PC-9 (cell line): ENCODE measurements at regions of chr5 and their contacts with region 1.

Region 1: DNA sequence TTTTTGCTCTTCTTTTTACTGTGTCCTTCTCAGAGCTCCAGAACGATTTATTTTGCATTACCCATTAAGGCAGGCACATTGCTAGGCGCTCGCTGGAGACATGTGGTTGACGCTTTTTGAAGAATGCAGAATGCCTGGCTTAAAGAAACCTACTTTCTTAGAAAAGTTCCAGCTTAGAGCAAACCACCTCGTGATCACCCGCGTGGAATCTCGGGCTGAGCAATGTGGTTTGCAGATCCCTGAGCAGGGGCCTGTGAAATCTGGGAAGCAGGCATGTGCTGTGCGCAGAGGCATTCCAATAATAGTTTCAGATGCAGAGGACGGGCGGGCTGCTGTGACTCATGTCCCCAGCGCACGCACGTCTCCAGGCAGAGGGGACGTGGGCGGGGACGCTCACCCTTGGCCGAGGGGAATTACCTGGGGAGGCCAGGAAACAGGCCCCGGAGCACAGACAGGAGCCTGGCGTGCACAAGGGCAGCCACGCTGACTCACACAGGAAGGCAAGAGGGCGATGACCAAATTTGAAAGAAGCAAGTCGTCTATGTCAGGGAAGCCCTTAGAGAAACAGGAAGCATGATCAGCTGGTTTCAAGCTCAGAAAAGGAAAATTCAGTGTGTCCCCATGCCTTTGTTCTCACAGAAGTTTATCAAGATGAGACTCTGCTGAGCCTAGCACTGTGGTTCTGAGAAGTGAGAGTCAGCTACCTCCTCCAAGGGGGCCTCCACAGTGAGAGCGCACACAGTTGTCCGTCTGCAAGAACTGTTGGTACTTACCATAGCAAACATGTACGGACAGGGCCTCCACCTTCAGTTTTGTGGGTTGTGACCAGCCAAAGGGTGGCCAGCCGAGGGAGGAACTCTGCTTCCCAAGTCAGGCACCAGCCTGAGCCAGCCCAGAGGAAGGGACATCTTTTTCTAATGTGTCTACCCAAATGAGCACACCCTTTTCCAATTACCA is 218.6 kb downstream of the PIK3R1 start:
- DNase-seq: peak; percentile 96 to 98
- H3K4me3 ChIP-seq: no peak overlapping the region
- H3K27ac ChIP-seq: peak overlapping the region; percentile 76
- H3K4me1 ChIP-seq: peaks cover 32% of the 10 kb centered on the region
- H3K27me3 ChIP-seq: no peaks in the 10 kb centered on the region
- CTCF ChIP-seq: no peak

Region 2: GRCh38 chr5:67341478-67341877 is 1092.7 kb before region 1 on chr5:
- CTCF ChIA-PET with region 1: no interaction called
- POLR2A ChIA-PET with region 1: no interaction called
- intact Hi-C with region 1: no loop called
- DNase-seq: no peak
- H3K4me3 ChIP-seq: no peak overlapping the region
- H3K27ac ChIP-seq: no peak overlapping the region
- H3K4me1 ChIP-seq: no peaks in the 10 kb centered on the region
- H3K27me3 ChIP-seq: no peaks in the 10 kb centered on the region; the same call in 1 of the 2 replicates
- CTCF ChIP-seq: no peak

Region 3: GRCh38 chr5:67773411-67774266 is 660.6 kb before region 1 on chr5:
- CTCF ChIA-PET with region 1: no interaction called
- POLR2A ChIA-PET with region 1: no interaction called
- intact Hi-C with region 1: no loop called
- DNase-seq: peak in 1 of 2 experiments; percentile 39
- H3K4me3 ChIP-seq: no peak overlapping the region
- H3K27ac ChIP-seq: peak overlapping the region; percentile 33; the same call in 1 of the 2 replicates
- H3K4me1 ChIP-seq: peaks cover 23% of the 10 kb centered on the region; the same call in 1 of the 2 replicates
- H3K27me3 ChIP-seq: no peaks in the 10 kb centered on the region
- CTCF ChIP-seq: no peak

Region 4: DNA sequence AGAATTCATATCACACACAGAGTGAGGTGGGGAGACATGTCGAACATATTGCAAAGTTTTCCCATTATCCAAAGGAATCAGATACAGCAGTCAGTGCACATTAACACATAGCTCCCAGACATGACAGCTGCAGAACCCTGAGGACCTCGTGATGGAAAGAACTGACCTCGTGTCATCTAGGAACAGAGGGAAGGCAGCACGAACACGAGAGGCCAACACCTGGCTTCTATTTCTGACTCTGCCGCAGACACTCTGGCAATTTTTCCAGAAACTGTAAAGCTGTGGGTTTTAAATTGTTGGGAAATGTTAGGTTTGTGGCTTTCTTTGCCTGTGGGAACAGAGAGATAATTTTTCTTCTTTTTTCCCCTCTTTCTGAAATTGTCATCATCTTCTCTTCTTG is 533.7 kb before region 1 on chr5:
- CTCF ChIA-PET with region 1: no interaction called
- POLR2A ChIA-PET with region 1: no interaction called
- intact Hi-C with region 1: no loop called
- DNase-seq: no peak
- H3K4me3 ChIP-seq: no peak overlapping the region
- H3K27ac ChIP-seq: no peak overlapping the region
- H3K4me1 ChIP-seq: no peaks in the 10 kb centered on the region
- H3K27me3 ChIP-seq: no peaks in the 10 kb centered on the region
- CTCF ChIP-seq: no peak

Region 5: GRCh38 chr5:68097066-68097465 is 337.1 kb before region 1 on chr5:
- CTCF ChIA-PET with region 1: no interaction called
- POLR2A ChIA-PET with region 1: no interaction called
- intact Hi-C with region 1: no loop called
- DNase-seq: no peak
- H3K4me3 ChIP-seq: no peak overlapping the region
- H3K27ac ChIP-seq: no peak overlapping the region
- H3K4me1 ChIP-seq: no peaks in the 10 kb centered on the region
- H3K27me3 ChIP-seq: no peaks in the 10 kb centered on the region
- CTCF ChIP-seq: no peak

Region 6: GRCh38 chr5:68331192-68332079 is 102.8 kb before region 1 on chr5:
- CTCF ChIA-PET with region 1: no interaction called
- POLR2A ChIA-PET with region 1: no interaction called
- intact Hi-C with region 1: loop called (anchors 5 kb)
- DNase-seq: no peak
- H3K4me3 ChIP-seq: no peak overlapping the region
- H3K27ac ChIP-seq: no peak overlapping the region
- H3K4me1 ChIP-seq: peaks cover 30% of the 10 kb centered on the region
- H3K27me3 ChIP-seq: no peaks in the 10 kb centered on the region
- CTCF ChIP-seq: no peak

Region 7: DNA sequence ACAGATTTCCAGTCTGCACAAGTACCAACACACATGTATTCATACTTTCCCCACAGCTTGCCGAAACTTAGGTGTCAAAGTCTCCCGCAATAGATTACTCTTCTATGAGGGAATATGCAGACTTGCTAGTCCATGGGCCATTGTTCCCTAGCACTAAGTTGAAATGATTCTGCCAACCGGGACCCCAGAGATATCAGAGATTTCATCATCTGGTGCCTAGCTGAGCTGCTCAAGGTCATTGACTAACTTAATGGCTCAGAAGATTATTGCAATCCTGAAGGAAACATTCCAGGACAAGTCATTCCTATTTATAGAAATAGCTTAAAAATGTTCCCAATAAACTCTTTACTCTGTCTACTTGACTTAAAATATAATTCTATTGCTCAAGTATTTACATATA is 16.0 kb before region 1 on chr5:
- CTCF ChIA-PET with region 1: interaction called, 17 read pairs
- POLR2A ChIA-PET with region 1: no interaction called
- intact Hi-C with region 1: no loop called
- DNase-seq: no peak
- H3K4me3 ChIP-seq: no peak overlapping the region
- H3K27ac ChIP-seq: no peak overlapping the region
- H3K4me1 ChIP-seq: peaks cover 20% of the 10 kb centered on the region
- H3K27me3 ChIP-seq: no peaks in the 10 kb centered on the region
- CTCF ChIP-seq: no peak

Region 8: GRCh38 chr5:68450232-68450852 is 16.1 kb after region 1 on chr5:
- CTCF ChIA-PET with region 1: no interaction called
- POLR2A ChIA-PET with region 1: interaction called, 5 read pairs
- intact Hi-C with region 1: loop called (anchors 1 kb)
- DNase-seq: peak; percentile 28 to 98
- H3K4me3 ChIP-seq: no peak overlapping the region
- H3K27ac ChIP-seq: peak overlapping the region; percentile 75
- H3K4me1 ChIP-seq: peaks cover 66% of the 10 kb centered on the region
- H3K27me3 ChIP-seq: no peaks in the 10 kb centered on the region
- CTCF ChIP-seq: no peak